Aorta (tissue), 5 donors: ENCODE measurements at regions of chr11 and their contacts with region 1.

Region 1: DNA sequence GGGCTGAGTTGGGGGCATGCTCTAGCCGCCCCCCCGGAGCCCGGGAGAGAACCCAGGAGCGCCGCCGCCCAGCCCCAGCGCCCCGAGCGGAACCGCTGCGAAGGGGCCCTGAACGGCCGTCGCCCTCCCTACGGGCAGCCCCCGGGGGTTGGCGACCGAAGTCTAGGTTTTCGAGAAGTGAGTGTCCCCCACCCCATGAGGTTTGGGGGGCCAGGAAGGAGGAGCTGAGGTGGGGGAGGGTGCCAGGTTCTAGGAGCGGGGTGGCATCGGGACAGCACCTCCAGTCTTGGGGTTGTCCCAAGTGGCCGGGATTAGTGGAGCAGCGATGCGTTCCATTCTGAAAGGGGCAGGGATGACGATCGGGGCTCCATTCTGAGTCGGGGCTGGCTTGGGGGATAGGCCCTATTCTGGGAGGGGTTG is 373 bp downstream of the PPP2R5B start:
- DNase-seq: no peak
- ATAC-seq: no peak
- H3K4me3 ChIP-seq: peak overlapping the region; percentile 58 to 63
- H3K27ac ChIP-seq: peak overlapping the region in 1 of 2 donors; percentile 7
- H3K4me1 ChIP-seq: no peaks in the 10 kb centered on the region
- H3K27me3 ChIP-seq: no peaks in the 10 kb centered on the region

Region 2: DNA sequence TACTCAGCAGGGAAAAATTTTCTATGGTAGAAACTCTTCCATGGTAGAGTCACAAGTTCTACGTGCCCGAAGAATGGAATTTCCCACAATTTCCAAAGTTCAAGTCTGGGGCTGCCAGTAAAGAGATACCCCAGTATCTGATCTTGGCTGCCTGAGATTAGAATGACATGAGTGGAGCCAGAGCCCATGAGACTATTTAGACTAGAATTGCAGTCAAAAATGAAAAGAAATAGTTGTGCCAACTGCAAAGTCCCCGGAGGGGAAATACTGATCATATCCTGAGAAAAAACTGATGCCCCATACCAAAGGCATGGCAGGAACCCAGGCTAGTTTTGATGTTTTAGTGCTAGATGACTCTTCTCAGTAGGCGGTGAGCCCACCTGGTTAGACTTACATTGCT is 35.9 kb after region 1 on chr11:
- intact Hi-C with region 1: no loop called
- DNase-seq: no peak
- ATAC-seq: no peak
- H3K4me3 ChIP-seq: no peak overlapping the region
- H3K27ac ChIP-seq: no peak overlapping the region
- H3K4me1 ChIP-seq: no peaks in the 10 kb centered on the region
- H3K27me3 ChIP-seq: peaks cover 0 to 2% of the 10 kb centered on the region in 2 donors

Region 3: DNA sequence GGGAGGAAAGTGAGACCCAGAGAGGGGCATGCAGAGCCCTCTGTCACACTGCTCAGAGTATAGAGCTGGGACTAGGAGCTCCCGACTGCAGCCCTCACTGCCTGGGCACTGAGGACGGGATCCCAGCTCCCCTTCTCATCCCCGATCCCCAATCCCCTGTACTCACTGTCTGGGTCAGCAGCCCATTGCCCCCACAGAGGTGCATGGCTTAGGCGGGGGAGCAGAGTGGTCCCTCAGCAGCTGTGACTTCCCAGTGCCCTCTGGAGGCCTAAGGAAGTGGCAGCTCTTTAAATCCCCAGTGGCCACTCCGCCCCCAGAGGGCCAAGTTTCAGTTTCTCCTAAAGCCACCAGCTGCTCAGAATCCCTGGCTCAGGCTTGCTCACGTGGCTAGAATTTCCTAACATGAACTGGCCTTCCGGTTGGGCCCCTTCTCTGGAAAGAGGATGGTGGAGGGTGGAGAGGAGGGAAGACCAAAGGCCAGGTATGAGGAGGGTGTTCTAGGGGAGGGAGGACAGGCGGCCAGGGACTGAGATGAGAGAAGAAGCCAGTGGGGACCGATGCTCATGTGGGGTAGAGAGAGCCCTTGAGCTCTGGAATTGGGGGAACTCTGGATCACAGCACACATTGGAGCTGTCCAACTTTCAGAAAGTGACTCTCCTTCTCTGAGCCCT is 72.0 kb after region 1 on chr11 and contains the start of gene BATF2:
- intact Hi-C with region 1: loop called in 1 of 2 experiments (anchors 5 kb)
- DNase-seq: peak; percentile 87 to 88
- ATAC-seq: peak; percentile 86
- H3K4me3 ChIP-seq: peak within 1 kb of the TSS; percentile 11 to 18
- H3K27ac ChIP-seq: peak within 1 kb of the TSS in 1 of 2 donors; percentile 7
- H3K4me1 ChIP-seq: no peaks in the 10 kb centered on the region
- H3K27me3 ChIP-seq: no peaks in the 10 kb centered on the region
- total RNA-seq, gene BATF2: 2.5 to 3.6 TPM

Region 4: DNA sequence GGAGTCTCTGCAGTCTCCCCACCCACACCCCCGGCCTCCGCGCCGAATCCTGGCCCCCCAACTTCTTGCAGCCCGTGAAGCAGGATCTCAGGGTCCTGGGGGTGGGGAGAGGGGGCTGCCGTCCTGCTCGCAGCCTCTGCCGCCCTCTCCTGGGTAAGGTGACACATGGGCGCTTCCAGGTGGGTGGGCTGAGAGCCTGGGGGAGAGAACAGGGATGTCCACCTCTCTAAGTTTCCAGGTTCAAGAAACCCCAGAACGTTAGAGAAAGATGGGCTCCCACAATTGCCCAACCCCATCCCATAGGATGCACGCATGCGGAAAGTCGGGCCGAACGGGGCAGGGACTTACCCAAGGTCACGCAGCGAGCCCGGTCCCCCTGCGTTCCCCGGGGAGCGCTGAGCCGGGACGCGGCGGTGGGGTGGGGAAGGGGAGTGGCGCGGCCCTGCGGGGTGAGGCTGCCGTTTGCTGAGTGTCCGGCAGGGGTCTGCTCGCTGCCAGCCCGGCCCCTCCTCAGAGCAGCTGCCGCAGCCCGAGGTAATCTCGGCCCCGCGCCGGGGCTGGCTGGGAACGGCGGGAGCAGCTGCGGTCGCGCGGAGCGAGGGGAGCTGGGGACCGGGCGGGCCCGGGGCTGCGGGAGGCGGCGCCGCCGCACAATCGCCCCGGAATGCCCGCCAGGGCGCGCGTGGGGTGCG is 256.2 kb after region 1 on chr11:
- intact Hi-C with region 1: no loop called
- DNase-seq: peak; percentile 70 to 88
- ATAC-seq: peak; percentile 70
- H3K4me3 ChIP-seq: peak overlapping the region; percentile 81 to 92
- H3K27ac ChIP-seq: no peak overlapping the region
- H3K4me1 ChIP-seq: no peaks in the 10 kb centered on the region
- H3K27me3 ChIP-seq: no peaks in the 10 kb centered on the region